ENCODE measurements at regions of chr16 and their contacts with region 1.

Region 1: DNA sequence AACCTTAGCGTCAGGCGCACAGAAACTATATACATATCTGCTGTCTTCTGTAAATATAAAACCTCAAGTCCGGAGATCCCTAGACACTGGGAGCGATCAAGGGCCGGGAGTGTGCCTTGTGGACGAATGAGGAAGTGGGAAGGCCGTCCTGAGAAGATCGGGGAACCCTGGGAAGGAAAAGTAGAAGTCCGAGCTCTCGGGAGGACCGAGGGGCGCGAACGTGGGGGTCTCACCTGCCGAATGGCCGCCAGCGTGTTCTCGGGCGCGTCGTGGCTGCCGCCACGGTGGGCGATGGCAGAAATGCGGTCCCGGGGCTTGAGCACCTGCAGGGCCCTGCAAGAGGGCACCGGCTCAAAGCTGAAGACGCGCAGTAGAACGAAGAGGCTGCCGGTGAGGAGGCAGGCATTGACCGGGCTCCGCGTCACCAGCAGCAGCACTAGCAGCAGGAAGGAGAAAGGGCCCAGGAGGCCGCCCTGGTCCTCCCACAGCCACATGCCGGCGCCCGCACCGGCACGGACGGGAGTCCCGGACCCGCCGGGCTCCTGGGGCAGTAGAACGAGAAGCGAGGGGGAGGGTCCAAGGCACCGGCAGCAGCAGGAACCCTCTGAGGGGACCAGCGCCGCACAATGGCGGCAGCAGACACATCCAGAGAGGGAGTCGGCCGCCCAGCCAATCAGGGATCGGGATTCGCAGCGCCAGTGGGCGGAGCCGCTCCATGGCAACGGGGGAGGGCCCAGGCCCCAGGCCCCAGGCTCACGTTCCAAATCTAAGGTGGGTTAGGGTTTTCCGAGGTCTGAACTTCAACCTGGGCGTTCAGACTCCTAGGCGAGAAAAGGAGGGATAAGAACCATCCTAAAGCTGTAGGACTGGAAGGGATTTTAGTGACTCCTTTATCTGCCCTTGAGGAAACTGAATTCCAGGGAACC is at the start of gene GDE1:
- DNase-seq: peak; percentile 82 to 95 (median 89)
- ATAC-seq: peak; percentile 88
- H3K4me3 ChIP-seq: peak within 1 kb of the TSS; percentile 88
- H3K4me3 Mint-ChIP-seq: peak within 1 kb of the TSS; percentile 86 to 99 (median 95)
- H3K27ac ChIP-seq: peak within 1 kb of the TSS; percentile 82
- H3K27ac Mint-ChIP-seq: peak within 1 kb of the TSS; percentile 72 to 95 (median 88)
- H3K4me1 ChIP-seq: peaks cover 15 to 31% of the 10 kb centered on the region in 2 donors
- H3K4me1 Mint-ChIP-seq: peaks cover 48 to 74% (median 63%) of the 10 kb centered on the region in 7 donors
- H3K27me3 ChIP-seq: no peaks in the 10 kb centered on the region
- H3K27me3 Mint-ChIP-seq: no peaks in the 10 kb centered on the region
- total RNA-seq, gene GDE1: 16.6 to 27.6 (median 18.8) TPM

Region 2: DNA sequence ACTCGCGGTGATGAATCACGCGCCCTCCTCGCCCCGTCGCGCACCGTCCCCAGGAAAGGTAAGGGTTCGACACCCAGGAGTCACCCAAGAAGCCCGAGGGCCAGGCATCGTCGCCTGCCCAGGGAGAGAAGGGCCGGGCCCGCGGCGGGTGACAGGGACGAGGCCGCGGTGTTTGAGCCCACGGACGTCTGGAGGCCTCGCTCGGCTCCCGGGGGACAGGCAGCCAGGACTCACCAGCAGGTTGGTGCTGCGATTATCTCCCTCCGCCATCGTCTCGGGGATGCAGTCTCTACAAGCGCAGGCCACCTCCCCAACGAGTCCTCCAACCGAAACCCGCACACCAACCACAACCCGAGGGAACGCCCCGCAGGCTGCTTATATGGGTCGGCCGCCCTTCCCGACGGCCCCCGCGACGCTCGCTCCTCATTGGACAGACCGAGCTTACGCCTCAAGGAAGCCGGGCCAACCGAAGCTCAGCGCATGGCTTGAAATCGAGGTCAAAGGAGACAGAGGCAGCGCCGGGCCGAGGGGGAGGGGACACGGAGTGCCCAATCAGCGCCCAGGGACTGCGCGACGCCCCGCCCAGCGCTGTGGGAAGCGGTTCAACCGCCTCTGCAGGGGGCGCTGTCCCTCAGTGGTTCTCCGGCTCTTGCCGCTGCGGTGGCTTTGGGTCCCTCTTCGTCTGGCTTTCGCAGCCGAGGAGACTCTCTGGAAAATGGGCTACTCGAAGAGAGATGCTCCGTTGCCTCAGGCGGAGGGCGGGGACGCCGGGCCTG is 720.3 kb before region 1 on chr16 and contains the start of gene ARL6IP1:
- CTCF ChIA-PET with region 1: no interaction called
- POLR2A ChIA-PET with region 1: interaction called, 3 read pairs
- intact Hi-C with region 1: loop called (anchors 1 to 5 kb)
- DNase-seq: peak; percentile 98 to 100 (median 99)
- ATAC-seq: peak; percentile 96
- H3K4me3 ChIP-seq: peak within 1 kb of the TSS; percentile 94
- H3K4me3 Mint-ChIP-seq: peak within 1 kb of the TSS; percentile 88 to 99 (median 96)
- H3K27ac ChIP-seq: peak within 1 kb of the TSS; percentile 86
- H3K27ac Mint-ChIP-seq: peak within 1 kb of the TSS; percentile 88 to 97 (median 95)
- H3K4me1 ChIP-seq: peaks cover 21 to 29% of the 10 kb centered on the region in 2 donors
- H3K4me1 Mint-ChIP-seq: peaks cover 30 to 70% (median 58%) of the 10 kb centered on the region in 7 donors
- H3K27me3 ChIP-seq: no peaks in the 10 kb centered on the region
- H3K27me3 Mint-ChIP-seq: peaks cover 0 to 2% (median 0%) of the 10 kb centered on the region in 5 donors
- total RNA-seq, gene ARL6IP1: 82.9 to 208 (median 94.4) TPM

Region 3: GRCh38 chr16:19067349-19068236 is 454.1 kb before region 1 on chr16 and contains the start of gene COQ7:
- CTCF ChIA-PET with region 1: no interaction called
- POLR2A ChIA-PET with region 1: interaction called, 6 read pairs
- intact Hi-C with region 1: loop called (anchors 1 kb)
- DNase-seq: peak; percentile 95 to 100 (median 99)
- ATAC-seq: peak; percentile 92
- H3K4me3 ChIP-seq: peak within 1 kb of the TSS; percentile 73
- H3K4me3 Mint-ChIP-seq: peak within 1 kb of the TSS; percentile 86 to 97 (median 95)
- H3K27ac ChIP-seq: peak within 1 kb of the TSS; percentile 100
- H3K27ac Mint-ChIP-seq: peak within 1 kb of the TSS; percentile 88 to 100 (median 98)
- H3K4me1 ChIP-seq: peaks cover 5 to 10% of the 10 kb centered on the region in 2 donors
- H3K4me1 Mint-ChIP-seq: peaks cover 0 to 24% (median 15%) of the 10 kb centered on the region in 7 donors
- H3K27me3 ChIP-seq: no peaks in the 10 kb centered on the region
- H3K27me3 Mint-ChIP-seq: peaks cover 0 to 5% (median 0%) of the 10 kb centered on the region in 5 donors
- total RNA-seq, gene COQ7: 16.7 to 20.4 (median 17.5) TPM

Region 4: GRCh38 chr16:19507867-19508266 is 13.9 kb before region 1 on chr16:
- CTCF ChIA-PET with region 1: interaction called, 4 read pairs
- POLR2A ChIA-PET with region 1: no interaction called
- intact Hi-C with region 1: loop called in 1 of 2 experiments (anchors 2 kb)
- DNase-seq: no peak
- ATAC-seq: no peak
- H3K4me3 ChIP-seq: no peak overlapping the region
- H3K4me3 Mint-ChIP-seq: no peak overlapping the region
- H3K27ac ChIP-seq: no peak overlapping the region
- H3K27ac Mint-ChIP-seq: no peak overlapping the region
- H3K4me1 ChIP-seq: no peaks in the 10 kb centered on the region
- H3K4me1 Mint-ChIP-seq: peaks cover 3 to 6% (median 4%) of the 10 kb centered on the region in 7 donors
- H3K27me3 ChIP-seq: no peaks in the 10 kb centered on the region
- H3K27me3 Mint-ChIP-seq: no peaks in the 10 kb centered on the region

Region 5: DNA sequence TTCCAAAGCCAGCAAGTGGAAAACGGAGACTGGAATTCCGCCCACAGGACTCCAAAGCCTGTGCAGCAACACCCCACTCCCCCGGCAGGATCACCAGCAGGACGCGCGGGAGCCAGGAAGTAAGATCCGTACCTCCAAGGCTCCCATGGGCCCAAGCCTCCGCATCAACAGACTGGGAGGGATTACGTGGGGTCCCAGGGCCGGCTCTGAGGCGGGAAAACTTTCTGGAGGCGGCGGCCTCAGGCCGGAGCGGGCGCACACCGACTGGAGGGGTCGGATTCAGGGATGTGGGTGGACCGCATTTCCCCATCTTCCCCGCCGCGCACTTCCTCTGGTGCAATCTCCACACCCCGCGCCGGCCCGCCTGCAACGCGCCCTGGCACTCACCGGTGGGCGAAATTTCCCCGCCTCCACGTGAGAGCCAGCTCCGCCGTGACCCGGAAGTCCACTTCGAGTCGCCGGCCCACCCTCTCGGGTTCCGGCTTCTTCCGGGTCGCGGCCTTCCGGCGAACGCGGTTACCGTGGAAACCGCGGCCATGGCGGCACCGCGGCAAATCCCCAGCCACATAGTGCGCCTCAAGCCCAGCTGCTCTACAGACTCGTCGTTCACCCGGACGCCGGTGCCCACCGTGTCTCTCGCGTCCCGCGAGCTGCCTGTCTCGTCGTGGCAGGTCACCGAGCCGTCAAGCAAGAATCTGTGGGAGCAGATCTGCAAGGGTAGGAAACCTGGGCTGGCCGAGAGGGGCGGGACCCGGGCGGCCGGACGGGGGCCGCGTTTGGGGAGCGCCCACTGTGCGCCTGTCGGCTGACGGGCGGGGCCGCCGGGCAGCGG is 196.3 kb after region 1 on chr16 and contains the starts of genes IQCK and KNOP1:
- CTCF ChIA-PET with region 1: no interaction called
- POLR2A ChIA-PET with region 1: no interaction called
- intact Hi-C with region 1: loop called (anchors 1 kb)
- DNase-seq: peak; percentile 79 to 92 (median 87)
- ATAC-seq: peak; percentile 97
- H3K4me3 ChIP-seq: peak within 1 kb of the TSS; percentile 90
- H3K4me3 Mint-ChIP-seq: peak within 1 kb of the TSS; percentile 90 to 97 (median 95)
- H3K27ac ChIP-seq: peak within 1 kb of the TSS; percentile 77
- H3K27ac Mint-ChIP-seq: peak within 1 kb of the TSS; percentile 63 to 89 (median 83)
- H3K4me1 ChIP-seq: peaks cover 0 to 7% of the 10 kb centered on the region in 2 donors
- H3K4me1 Mint-ChIP-seq: peaks cover 16 to 62% (median 48%) of the 10 kb centered on the region in 7 donors
- H3K27me3 ChIP-seq: no peaks in the 10 kb centered on the region
- H3K27me3 Mint-ChIP-seq: no peaks in the 10 kb centered on the region
- total RNA-seq, gene IQCK: 0.48 to 4.1 (median 2.6) TPM
- total RNA-seq, gene KNOP1: 6.4 to 20.6 (median 18.5) TPM

Region 6: DNA sequence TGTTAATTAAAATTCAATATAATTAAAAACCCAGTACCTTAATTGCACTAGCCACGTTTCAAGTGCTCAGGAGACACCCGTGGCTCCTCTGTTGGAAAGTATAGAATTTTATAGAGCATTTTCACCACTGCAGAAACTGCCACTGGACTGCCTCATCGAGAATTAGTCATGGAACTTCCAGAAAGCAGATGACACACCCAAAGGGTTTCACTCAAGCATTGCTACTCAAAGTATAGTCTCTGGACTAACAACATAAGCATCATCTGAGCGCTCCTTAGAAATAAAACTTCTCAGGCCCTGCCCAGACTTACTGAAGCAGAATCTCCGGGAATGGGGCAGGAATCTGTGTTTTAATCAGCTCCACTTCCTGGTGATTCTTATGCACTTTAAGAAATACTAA is 615.5 kb after region 1 on chr16:
- CTCF ChIA-PET with region 1: no interaction called
- POLR2A ChIA-PET with region 1: no interaction called
- intact Hi-C with region 1: no loop called
- DNase-seq: no peak
- ATAC-seq: no peak
- H3K4me3 ChIP-seq: no peak overlapping the region
- H3K4me3 Mint-ChIP-seq: no peak overlapping the region
- H3K27ac ChIP-seq: no peak overlapping the region
- H3K27ac Mint-ChIP-seq: no peak overlapping the region
- H3K4me1 ChIP-seq: no peaks in the 10 kb centered on the region
- H3K4me1 Mint-ChIP-seq: no peaks in the 10 kb centered on the region
- H3K27me3 ChIP-seq: no peaks in the 10 kb centered on the region
- H3K27me3 Mint-ChIP-seq: peaks cover 0 to 26% (median 13%) of the 10 kb centered on the region in 5 donors

Region 7: GRCh38 chr16:20741554-20742285 is 1220.0 kb after region 1 on chr16 and contains the start of gene THUMPD1:
- CTCF ChIA-PET with region 1: no interaction called
- POLR2A ChIA-PET with region 1: no interaction called
- intact Hi-C with region 1: loop called (anchors 1 to 5 kb)
- DNase-seq: peak; percentile 88 to 97 (median 95)
- ATAC-seq: peak; percentile 97
- H3K4me3 ChIP-seq: peak within 1 kb of the TSS; percentile 100
- H3K4me3 Mint-ChIP-seq: peak within 1 kb of the TSS; percentile 93 to 98 (median 96)
- H3K27ac ChIP-seq: peak within 1 kb of the TSS; percentile 93
- H3K27ac Mint-ChIP-seq: peak within 1 kb of the TSS; percentile 90 to 99 (median 98)
- H3K4me1 ChIP-seq: peaks cover 12 to 25% of the 10 kb centered on the region in 2 donors
- H3K4me1 Mint-ChIP-seq: peaks cover 10 to 35% (median 26%) of the 10 kb centered on the region in 7 donors
- H3K27me3 ChIP-seq: no peaks in the 10 kb centered on the region
- H3K27me3 Mint-ChIP-seq: peaks cover 0 to 2% (median 0%) of the 10 kb centered on the region in 5 donors
- total RNA-seq, gene THUMPD1: 41.9 to 107 (median 72.5) TPM